Transverse colon (tissue), 4 donors: ENCODE measurements at regions of chr20 and their contacts with region 1.

Region 1: GRCh38 chr20:59222253-59223181 is 58.9 kb downstream of the ZNF831 start:
- DNase-seq: peak; percentile 88
- H3K4me3 ChIP-seq: peak overlapping the region; percentile 7 to 86 (median 50)
- H3K27ac ChIP-seq: peak overlapping the region; percentile 11 to 79 (median 68)
- H3K4me1 ChIP-seq: peaks cover 4 to 21% (median 9%) of the 10 kb centered on the region in 4 donors
- H3K27me3 ChIP-seq: peaks cover 39% of the 10 kb centered on the region
- CTCF ChIP-seq: peak; percentile 91 to 99 (median 95)
- EP300 ChIP-seq: no peak
- POLR2A ChIP-seq: no peak

Region 2: GRCh38 chr20:58481481-58482021 is 741.0 kb before region 1 on chr20:
- in situ Hi-C with region 1: loop called in 1 of 4 experiments (anchors 25 kb)
- intact Hi-C with region 1: no loop called
- DNase-seq: peak; percentile 59
- H3K4me3 ChIP-seq: peak overlapping the region in 1 of 4 donors; percentile 18
- H3K27ac ChIP-seq: peak overlapping the region in 2 of 4 donors; percentile 50 to 59
- H3K4me1 ChIP-seq: peaks cover 6 to 9% (median 8%) of the 10 kb centered on the region in 4 donors
- H3K27me3 ChIP-seq: no peaks in the 10 kb centered on the region
- CTCF ChIP-seq: peak; percentile 60 to 84 (median 70)
- EP300 ChIP-seq: no peak
- POLR2A ChIP-seq: no peak

Region 3: DNA sequence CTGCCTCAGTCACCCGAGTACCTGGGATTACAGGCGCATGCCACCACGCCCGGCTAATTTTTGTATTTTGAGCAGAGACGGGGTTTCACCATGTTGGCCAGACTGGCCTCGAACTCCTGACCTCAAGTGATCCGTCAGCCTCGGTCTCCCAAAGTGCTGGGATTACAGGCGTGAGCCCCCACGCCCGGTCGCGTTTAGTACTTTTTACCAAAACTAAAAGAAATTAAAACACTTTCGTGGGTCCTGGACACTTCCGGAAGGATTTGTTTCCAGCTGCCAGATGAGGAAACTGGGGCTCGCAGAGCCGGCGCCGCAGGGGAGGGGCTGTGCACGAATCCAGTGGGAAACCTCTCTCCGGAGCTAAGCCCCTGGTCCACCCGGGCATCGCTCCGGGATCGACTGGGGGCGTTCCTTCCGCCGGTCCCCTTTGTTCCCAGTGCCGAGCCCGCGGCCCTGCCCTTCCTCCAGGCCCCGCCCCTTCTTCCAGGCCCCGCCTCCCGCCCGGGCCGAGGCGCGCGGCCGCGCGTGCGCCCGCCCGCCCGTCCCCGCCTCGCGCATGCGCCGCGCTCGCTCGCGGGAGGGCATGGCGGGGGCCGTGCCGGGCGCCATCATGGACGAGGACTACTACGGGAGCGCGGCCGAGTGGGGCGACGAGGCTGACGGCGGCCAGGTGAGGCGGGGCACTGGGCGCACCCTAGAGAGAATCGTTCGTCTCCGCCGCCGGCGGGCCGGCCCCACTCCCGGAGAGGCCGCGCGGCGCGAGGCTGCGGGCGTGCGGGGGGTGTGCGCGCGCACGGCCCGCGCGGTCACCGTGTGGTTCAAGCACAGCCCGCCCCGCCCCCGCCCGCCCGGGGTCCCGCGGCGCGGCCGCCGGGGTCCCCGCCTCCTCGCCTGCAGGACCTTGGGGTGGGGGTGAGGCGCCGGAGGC is 241.6 kb before region 1 on chr20 and contains the start of gene NELFCD:
- in situ Hi-C with region 1: loop called in 1 of 4 experiments (anchors 10 kb)
- intact Hi-C with region 1: no loop called
- DNase-seq: peak; percentile 93
- H3K4me3 ChIP-seq: peak within 1 kb of the TSS; percentile 83 to 96 (median 88)
- H3K27ac ChIP-seq: peak within 1 kb of the TSS; percentile 87 to 94 (median 89)
- H3K4me1 ChIP-seq: peaks cover 7 to 31% (median 20%) of the 10 kb centered on the region in 4 donors
- H3K27me3 ChIP-seq: no peaks in the 10 kb centered on the region
- CTCF ChIP-seq: no peak
- EP300 ChIP-seq: no peak
- POLR2A ChIP-seq: peak; percentile 52
- total RNA-seq, gene NELFCD: 43.7 to 68.1 (median 55.1) TPM

Region 4: GRCh38 chr20:59087829-59088433 is 134.6 kb before region 1 on chr20:
- in situ Hi-C with region 1: loop called in 2 of 4 experiments (anchors 5 to 10 kb)
- intact Hi-C with region 1: no loop called
- DNase-seq: peak; percentile 89
- H3K4me3 ChIP-seq: no peak overlapping the region
- H3K27ac ChIP-seq: no peak overlapping the region
- H3K4me1 ChIP-seq: no peaks in the 10 kb centered on the region
- H3K27me3 ChIP-seq: peaks cover 3% of the 10 kb centered on the region
- CTCF ChIP-seq: peak; percentile 89 to 95 (median 94)
- EP300 ChIP-seq: no peak
- POLR2A ChIP-seq: no peak

Region 5: DNA sequence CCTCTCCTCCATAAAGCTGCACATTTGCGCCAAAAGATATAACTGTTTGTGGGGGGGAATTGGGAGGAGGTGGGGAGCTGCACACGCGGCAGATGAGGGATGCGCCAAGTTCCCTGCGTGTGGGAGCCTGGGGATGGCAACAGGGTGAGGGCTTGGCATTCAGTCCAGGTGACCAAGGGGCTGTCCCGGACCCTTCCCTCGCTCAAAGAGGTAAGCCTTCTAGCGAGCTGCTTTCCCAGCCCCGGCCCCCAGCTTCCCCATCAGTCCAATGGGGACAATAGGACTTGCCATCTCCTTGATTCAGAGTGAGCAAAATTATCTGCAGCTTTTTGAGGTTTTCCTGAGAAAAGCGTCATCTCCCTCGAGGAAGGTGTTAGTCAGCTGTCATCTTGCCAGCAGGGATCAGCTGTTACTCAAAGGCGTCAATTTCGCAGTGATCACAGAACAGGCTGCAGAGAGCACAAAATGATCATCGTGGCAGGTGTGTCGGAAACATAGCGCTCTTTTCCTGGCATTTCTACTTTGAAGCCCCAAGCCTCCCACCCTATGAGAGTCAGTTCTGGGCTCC is 37.6 kb before region 1 on chr20:
- in situ Hi-C with region 1: no loop called
- intact Hi-C with region 1: no loop called
- DNase-seq: no peak
- H3K4me3 ChIP-seq: no peak overlapping the region
- H3K27ac ChIP-seq: no peak overlapping the region
- H3K4me1 ChIP-seq: no peaks in the 10 kb centered on the region
- H3K27me3 ChIP-seq: no peaks in the 10 kb centered on the region
- CTCF ChIP-seq: no peak
- EP300 ChIP-seq: no peak
- POLR2A ChIP-seq: no peak

Region 6: DNA sequence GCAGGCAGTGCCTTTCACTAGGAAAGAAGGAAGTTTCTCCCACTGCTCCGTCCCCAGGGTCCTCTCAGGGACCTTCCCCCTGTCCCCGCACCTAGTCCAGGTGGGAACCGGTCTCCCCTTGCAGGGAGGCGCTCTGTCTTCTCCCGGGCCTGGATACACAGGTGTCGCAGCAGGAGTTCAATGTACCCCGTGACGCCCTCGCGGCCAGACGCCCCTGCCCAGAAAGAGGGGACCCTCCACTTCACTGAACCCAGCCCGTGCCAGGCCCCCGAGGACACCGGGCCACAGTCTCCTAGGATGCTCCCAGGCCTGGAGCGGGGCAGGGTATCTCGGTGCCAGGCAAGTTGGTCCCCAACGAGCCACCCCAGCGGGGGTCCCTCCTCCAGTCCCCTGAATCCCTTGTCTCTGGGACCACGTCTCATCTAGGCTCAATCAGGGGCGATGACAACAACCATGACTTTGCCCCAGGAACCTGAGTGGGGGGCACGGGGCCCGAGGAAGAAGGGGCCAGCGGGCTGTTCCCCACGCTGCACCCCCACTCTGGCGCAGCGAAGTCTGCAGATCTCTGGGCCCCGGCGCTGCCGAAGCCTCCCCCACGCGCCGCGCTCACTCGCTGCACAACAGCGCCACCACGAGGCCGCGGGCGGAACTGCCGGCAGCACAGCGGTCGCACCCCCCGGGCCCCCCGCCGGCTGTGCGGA is 180.9 kb after region 1 on chr20:
- in situ Hi-C with region 1: loop called in 2 of 4 experiments (anchors 10 to 25 kb)
- intact Hi-C with region 1: no loop called
- DNase-seq: peak; percentile 62
- H3K4me3 ChIP-seq: peak overlapping the region in 2 of 4 donors; percentile 1 to 23
- H3K27ac ChIP-seq: no peak overlapping the region
- H3K4me1 ChIP-seq: peaks cover 7 to 18% (median 11%) of the 10 kb centered on the region in 4 donors
- H3K27me3 ChIP-seq: peaks cover 72% of the 10 kb centered on the region
- CTCF ChIP-seq: peak; percentile 91 to 100 (median 99)
- EP300 ChIP-seq: no peak
- POLR2A ChIP-seq: no peak